ENCODE measurements at regions of chr3 and their contacts with region 1.

Region 1: DNA sequence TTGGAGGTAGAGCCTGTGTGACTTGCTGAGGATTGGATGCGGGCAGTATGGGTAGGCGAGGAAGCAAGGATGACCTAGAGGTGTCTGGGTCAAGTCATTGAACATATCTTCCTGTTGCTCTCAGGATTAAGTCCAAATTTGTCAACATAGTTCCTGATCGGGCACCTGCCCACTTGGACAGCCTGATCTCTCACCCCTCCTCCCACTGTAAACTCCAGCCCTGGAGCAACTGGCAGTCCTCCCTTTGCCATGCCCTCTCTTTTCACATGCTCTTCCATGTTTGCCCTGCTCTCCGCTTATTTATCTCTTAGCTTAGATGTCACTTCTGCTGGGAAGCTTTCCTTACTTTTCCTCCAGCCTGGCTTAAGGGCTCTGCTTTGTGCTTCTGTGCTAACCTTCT is 47.6 kb upstream of the PPP4R2 start:
- DNase-seq: no peak
- H3K4me3 ChIP-seq: no peak overlapping the region
- H3K27ac ChIP-seq: no peak overlapping the region
- H3K4me1 ChIP-seq: no peaks in the 10 kb centered on the region
- H3K27me3 ChIP-seq: no peaks in the 10 kb centered on the region
- CTCF ChIP-seq: no peak

Region 2: GRCh38 chr3:72907731-72908620 is 41.0 kb before region 1 on chr3:
- intact Hi-C with region 1: no loop called
- DNase-seq: peak; percentile 80 to 91
- H3K4me3 ChIP-seq: no peak overlapping the region
- H3K27ac ChIP-seq: peak overlapping the region; percentile 61 to 75
- H3K4me1 ChIP-seq: peaks cover 0 to 65% (median 31%) of the 10 kb centered on the region in 4 donors
- H3K27me3 ChIP-seq: no peaks in the 10 kb centered on the region
- CTCF ChIP-seq: no peak

Region 3: DNA sequence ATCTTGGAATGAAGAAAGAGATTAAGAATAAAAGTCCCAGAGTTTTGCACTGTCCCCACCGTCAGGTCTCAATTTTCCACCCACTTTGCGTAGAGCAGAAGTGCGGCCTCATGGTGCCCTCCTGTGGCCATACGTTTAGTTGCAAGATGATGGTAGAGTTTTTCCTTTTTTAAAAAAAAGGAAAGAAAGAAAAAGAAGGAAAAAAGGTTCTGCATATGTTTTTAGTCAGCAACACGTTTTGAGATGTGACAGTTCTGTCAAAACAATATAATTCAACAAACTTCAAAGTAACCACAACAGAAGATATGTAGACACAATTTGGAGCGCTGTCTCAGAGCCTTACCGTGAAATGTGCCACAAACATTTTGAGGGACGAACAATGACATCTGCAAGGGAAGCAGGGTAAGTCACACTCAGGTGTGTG is 137.1 kb after region 1 on chr3:
- intact Hi-C with region 1: loop called (anchors 10 kb)
- DNase-seq: no peak
- H3K4me3 ChIP-seq: no peak overlapping the region
- H3K27ac ChIP-seq: no peak overlapping the region
- H3K4me1 ChIP-seq: no peaks in the 10 kb centered on the region
- H3K27me3 ChIP-seq: no peaks in the 10 kb centered on the region
- CTCF ChIP-seq: peak; percentile 68 to 76

Measured in tibial artery (tissue), 4 donors.